ENCODE measurements at regions of chr6 and their contacts with region 1.

Region 1: GRCh38 chr6:16657768-16658167 is 103.5 kb downstream of the ATXN1 start:
- DNase-seq: no peak
- ATAC-seq: peak; percentile 70
- H3K4me3 Mint-ChIP-seq: peak overlapping the region; percentile 39
- H3K27ac Mint-ChIP-seq: peak overlapping the region; percentile 81
- H3K4me1 Mint-ChIP-seq: peaks cover 68% of the 10 kb centered on the region
- H3K27me3 Mint-ChIP-seq: no peaks in the 10 kb centered on the region

Region 2: GRCh38 chr6:16409531-16410441 is 248.0 kb before region 1 on chr6:
- CTCF ChIA-PET with region 1: no interaction called
- POLR2A ChIA-PET with region 1: no interaction called
- intact Hi-C with region 1: loop called in 1 of 2 experiments (anchors 5 kb)
- DNase-seq: peak; percentile 77
- ATAC-seq: peak; percentile 50
- H3K4me3 Mint-ChIP-seq: no peak overlapping the region
- H3K27ac Mint-ChIP-seq: peak overlapping the region; percentile 30
- H3K4me1 Mint-ChIP-seq: peaks cover 41% of the 10 kb centered on the region
- H3K27me3 Mint-ChIP-seq: no peaks in the 10 kb centered on the region

Region 3: DNA sequence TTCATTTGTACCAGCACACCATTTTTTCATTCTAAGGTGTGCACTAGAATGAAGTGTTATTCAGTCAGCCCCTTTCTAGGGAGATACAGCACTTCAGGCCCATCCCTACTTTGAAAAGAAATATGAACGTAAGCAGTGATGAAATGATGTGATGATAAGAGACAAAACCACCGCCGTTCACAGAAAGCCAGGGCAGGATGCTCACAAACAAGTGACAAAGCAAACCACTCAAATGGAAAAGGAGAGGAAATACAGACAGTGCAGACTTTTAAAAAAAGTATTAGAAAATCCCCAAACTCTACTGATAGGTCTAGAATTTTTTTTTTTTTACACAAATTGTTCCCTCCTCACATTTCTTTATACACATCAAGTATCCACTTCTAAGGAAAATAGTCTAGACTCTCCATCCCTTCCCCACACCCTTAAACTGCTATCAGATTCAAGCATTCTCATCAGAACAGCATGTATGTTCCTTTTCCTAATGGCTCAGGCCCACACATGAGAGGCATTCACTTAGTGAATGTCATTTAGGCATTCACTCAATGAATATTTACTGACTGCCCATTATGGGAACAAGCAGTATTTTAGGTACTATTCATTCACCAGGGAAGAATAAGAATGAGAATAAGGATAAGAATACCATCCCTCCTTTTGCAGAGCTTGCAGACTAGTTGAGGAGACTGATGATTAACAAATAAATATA is 175.9 kb before region 1 on chr6:
- CTCF ChIA-PET with region 1: no interaction called
- POLR2A ChIA-PET with region 1: no interaction called
- intact Hi-C with region 1: loop called (anchors 2 to 5 kb)
- DNase-seq: peak; percentile 74
- ATAC-seq: peak; percentile 85
- H3K4me3 Mint-ChIP-seq: peak overlapping the region; percentile 10
- H3K27ac Mint-ChIP-seq: peak overlapping the region; percentile 92
- H3K4me1 Mint-ChIP-seq: peaks cover 81% of the 10 kb centered on the region
- H3K27me3 Mint-ChIP-seq: no peaks in the 10 kb centered on the region

Region 4: DNA sequence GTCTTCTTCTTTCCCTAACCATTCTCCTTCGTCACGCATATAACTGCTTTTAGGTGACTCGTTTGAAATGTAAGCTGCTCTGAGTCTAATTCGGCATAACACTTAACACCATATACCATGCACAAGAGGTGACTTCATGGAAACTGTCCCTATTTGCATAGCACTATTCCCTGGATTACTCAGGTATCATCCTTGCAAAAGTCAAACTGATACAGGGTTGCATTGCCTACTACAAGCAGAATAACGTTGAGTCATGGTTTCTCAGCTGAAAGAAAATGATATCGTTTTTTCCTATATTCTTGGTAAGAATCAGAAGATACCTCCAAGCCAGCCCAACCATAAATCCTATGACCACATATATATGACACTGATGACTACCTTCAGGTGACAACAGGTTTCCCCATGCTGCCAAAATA is 124.0 kb before region 1 on chr6:
- CTCF ChIA-PET with region 1: no interaction called
- POLR2A ChIA-PET with region 1: no interaction called
- intact Hi-C with region 1: loop called (anchors 1 to 5 kb)
- DNase-seq: no peak
- ATAC-seq: peak; percentile 89
- H3K4me3 Mint-ChIP-seq: no peak overlapping the region
- H3K27ac Mint-ChIP-seq: peak overlapping the region; percentile 75
- H3K4me1 Mint-ChIP-seq: peaks cover 29% of the 10 kb centered on the region
- H3K27me3 Mint-ChIP-seq: no peaks in the 10 kb centered on the region

Region 5: GRCh38 chr6:16635810-16636602 is 21.8 kb before region 1 on chr6:
- CTCF ChIA-PET with region 1: no interaction called
- POLR2A ChIA-PET with region 1: no interaction called
- intact Hi-C with region 1: no loop called
- DNase-seq: peak; percentile 27
- ATAC-seq: peak; percentile 17
- H3K4me3 Mint-ChIP-seq: no peak overlapping the region
- H3K27ac Mint-ChIP-seq: peak overlapping the region; percentile 51
- H3K4me1 Mint-ChIP-seq: peaks cover 38% of the 10 kb centered on the region
- H3K27me3 Mint-ChIP-seq: no peaks in the 10 kb centered on the region

Region 6: GRCh38 chr6:16670183-16670582 is 12.4 kb after region 1 on chr6:
- CTCF ChIA-PET with region 1: interaction called, 3 read pairs
- POLR2A ChIA-PET with region 1: interaction called, 3 read pairs
- intact Hi-C with region 1: loop called (anchors 1 kb)
- DNase-seq: no peak
- ATAC-seq: peak; percentile 38
- H3K4me3 Mint-ChIP-seq: peak overlapping the region; percentile 7
- H3K27ac Mint-ChIP-seq: peak overlapping the region; percentile 87
- H3K4me1 Mint-ChIP-seq: peaks cover 63% of the 10 kb centered on the region
- H3K27me3 Mint-ChIP-seq: no peaks in the 10 kb centered on the region

Region 7: GRCh38 chr6:16690608-16691198 is 32.9 kb after region 1 on chr6:
- CTCF ChIA-PET with region 1: interaction called, 6 read pairs
- POLR2A ChIA-PET with region 1: interaction called, 3 read pairs
- intact Hi-C with region 1: loop called (anchors 1 kb)
- DNase-seq: peak; percentile 73
- ATAC-seq: peak; percentile 75
- H3K4me3 Mint-ChIP-seq: peak overlapping the region; percentile 34
- H3K27ac Mint-ChIP-seq: peak overlapping the region; percentile 88
- H3K4me1 Mint-ChIP-seq: peaks cover 88% of the 10 kb centered on the region
- H3K27me3 Mint-ChIP-seq: no peaks in the 10 kb centered on the region

Region 8: DNA sequence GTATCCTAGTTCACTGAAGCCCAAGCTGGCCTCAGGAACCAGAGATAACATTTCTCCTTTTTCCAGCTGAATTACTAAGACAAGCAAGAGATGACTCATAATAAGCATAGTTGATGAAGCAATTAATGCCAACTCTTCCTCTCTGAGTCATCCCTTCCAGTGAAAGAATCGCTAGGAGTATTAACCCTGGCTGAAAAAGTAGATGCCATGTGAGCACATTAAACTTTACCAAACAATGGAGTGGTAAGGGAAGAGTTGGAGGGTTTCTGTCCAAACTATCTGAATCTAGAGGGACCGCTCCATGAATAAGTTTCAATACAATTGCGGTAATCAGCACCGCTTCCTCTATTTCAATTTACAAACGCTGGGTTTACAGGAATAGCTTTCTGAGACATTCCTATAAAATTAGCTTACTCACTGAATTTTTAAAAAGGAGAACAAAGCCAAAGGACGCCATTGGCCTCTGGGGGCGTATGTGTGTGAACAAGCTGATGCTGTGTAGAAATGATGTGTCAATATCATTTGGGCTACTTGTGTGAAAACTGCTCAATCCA is 55.2 kb after region 1 on chr6:
- CTCF ChIA-PET with region 1: no interaction called
- POLR2A ChIA-PET with region 1: no interaction called
- intact Hi-C with region 1: loop called (anchors 2 kb)
- DNase-seq: peak; percentile 57
- ATAC-seq: peak; percentile 63
- H3K4me3 Mint-ChIP-seq: peak overlapping the region; percentile 45
- H3K27ac Mint-ChIP-seq: peak overlapping the region; percentile 91
- H3K4me1 Mint-ChIP-seq: peaks cover 52% of the 10 kb centered on the region
- H3K27me3 Mint-ChIP-seq: no peaks in the 10 kb centered on the region

Measured in activated CD4-positive, alpha-beta T cell treated with anti-CD3 and anti-CD28 coated beads for 36 hours (primary cell).